PC-3 (cell line): ENCODE measurements at regions of chr3 and their contacts with region 1.

Region 1: DNA sequence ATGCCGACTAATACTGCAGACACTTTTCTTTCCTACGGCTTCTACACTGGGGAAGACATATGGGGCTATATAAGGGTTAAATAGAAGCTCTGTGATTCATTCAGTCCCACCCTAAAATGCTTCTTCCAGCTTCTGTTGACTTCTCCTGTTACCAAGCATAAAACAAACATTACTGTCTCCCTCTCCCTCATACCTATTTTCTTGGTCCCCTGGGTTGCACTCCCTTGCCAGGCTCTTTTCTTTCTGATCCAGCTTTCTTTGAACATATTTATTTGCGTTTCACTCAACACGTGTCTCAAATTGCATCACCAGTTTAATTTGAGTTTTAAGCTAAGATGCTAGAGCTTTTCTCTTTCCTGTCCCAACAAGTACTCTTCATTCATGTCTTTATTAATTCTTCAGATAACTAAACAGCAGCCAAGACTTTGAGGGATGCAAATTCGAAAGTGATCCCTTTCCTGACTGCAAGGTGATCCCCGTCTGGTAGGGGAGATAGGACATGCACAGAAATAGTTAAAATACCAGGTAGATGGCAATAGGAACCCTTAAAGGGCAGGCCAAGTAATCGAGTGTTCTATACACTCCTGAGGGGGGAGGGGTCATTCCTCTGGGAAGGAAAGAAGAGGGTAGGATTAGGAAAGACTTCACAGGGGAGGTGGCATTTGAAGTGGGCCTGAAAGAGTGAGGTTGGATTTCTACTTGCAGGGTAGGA is 198.6 kb upstream of the BCL6 start:
- DNase-seq: peak; percentile 85
- ATAC-seq: peak; percentile 87
- H3K4me3 ChIP-seq: peak overlapping the region; percentile 57
- H3K27ac ChIP-seq: peak overlapping the region; percentile 80
- H3K4me1 ChIP-seq: peaks cover 44% of the 10 kb centered on the region
- H3K27me3 ChIP-seq: no peaks in the 10 kb centered on the region
- CTCF ChIP-seq: no peak

Region 2: GRCh38 chr3:187878776-187879518 is 64.9 kb before region 1 on chr3:
- CTCF ChIA-PET with region 1: no interaction called
- POLR2A ChIA-PET with region 1: no interaction called
- intact Hi-C with region 1: loop called (anchors 2 kb)
- DNase-seq: peak; percentile 87
- ATAC-seq: peak; percentile 89
- H3K4me3 ChIP-seq: peak overlapping the region; percentile 54
- H3K27ac ChIP-seq: peak overlapping the region; percentile 56
- H3K4me1 ChIP-seq: peaks cover 40% of the 10 kb centered on the region
- H3K27me3 ChIP-seq: no peaks in the 10 kb centered on the region
- CTCF ChIP-seq: no peak

Region 3: DNA sequence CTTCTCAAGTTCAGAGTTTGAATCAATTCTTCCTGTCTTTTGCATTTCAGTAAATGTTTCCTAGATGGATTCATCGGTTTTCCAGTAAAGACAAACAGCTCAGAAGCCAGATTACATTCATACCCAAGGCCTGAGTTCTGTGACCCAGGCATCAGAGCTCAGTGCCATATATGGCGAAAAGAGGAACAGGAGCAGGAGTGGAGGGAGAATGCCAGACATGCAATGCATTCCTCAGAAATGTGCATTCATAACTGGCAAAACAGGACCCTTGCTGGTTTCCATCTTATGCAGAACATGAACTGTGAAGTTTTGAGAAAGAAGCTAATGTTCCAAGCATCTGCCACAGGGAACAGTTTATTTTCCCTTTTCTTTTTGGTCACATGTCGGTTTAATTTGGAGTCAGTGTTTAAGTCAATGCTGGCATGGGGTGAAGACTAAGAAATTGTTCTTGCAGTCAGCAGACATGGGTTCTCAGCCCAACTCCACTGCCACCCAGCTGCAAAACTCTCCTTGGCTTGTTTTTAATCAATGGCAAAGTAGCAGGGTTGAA is 326.7 kb after region 1 on chr3:
- CTCF ChIA-PET with region 1: no interaction called
- POLR2A ChIA-PET with region 1: no interaction called
- intact Hi-C with region 1: no loop called
- DNase-seq: peak; percentile 60
- ATAC-seq: no peak
- H3K4me3 ChIP-seq: no peak overlapping the region
- H3K27ac ChIP-seq: no peak overlapping the region
- H3K4me1 ChIP-seq: peaks cover 80% of the 10 kb centered on the region
- H3K27me3 ChIP-seq: no peaks in the 10 kb centered on the region
- CTCF ChIP-seq: no peak

Region 4: DNA sequence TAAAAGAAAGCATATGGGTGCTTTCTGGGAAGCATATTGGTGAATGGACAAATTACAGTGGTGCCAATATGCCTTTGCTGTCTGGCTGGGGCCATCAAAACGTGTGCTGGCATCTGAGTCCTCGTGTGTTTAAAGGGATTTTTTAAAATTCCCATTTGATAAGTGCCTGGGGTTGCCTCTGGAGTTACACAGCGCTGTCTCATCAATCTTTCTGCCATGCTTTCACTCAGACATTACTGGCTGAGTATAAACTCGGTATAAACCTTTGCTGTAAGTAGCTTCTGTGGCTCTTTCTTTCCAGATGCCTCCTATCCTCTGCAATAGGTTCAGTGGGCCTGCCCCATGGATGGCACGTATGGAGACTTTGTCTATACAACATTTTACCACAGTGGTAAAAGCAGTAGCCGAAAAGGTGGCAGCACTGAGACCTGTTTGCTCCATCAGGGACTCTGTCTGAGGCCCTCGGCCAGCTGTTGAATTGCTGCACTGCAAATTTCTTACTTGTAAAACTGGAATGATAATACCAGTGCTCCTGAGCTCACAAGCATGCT is 405.6 kb after region 1 on chr3:
- CTCF ChIA-PET with region 1: no interaction called
- POLR2A ChIA-PET with region 1: no interaction called
- intact Hi-C with region 1: no loop called
- DNase-seq: peak; percentile 18
- ATAC-seq: no peak; the same call in 1 of the 2 replicates
- H3K4me3 ChIP-seq: no peak overlapping the region
- H3K27ac ChIP-seq: no peak overlapping the region
- H3K4me1 ChIP-seq: peaks cover 11% of the 10 kb centered on the region
- H3K27me3 ChIP-seq: no peaks in the 10 kb centered on the region
- CTCF ChIP-seq: no peak